GM23248 (cell line): ENCODE measurements at regions of chr20 and their contacts with region 1.

Region 1: DNA sequence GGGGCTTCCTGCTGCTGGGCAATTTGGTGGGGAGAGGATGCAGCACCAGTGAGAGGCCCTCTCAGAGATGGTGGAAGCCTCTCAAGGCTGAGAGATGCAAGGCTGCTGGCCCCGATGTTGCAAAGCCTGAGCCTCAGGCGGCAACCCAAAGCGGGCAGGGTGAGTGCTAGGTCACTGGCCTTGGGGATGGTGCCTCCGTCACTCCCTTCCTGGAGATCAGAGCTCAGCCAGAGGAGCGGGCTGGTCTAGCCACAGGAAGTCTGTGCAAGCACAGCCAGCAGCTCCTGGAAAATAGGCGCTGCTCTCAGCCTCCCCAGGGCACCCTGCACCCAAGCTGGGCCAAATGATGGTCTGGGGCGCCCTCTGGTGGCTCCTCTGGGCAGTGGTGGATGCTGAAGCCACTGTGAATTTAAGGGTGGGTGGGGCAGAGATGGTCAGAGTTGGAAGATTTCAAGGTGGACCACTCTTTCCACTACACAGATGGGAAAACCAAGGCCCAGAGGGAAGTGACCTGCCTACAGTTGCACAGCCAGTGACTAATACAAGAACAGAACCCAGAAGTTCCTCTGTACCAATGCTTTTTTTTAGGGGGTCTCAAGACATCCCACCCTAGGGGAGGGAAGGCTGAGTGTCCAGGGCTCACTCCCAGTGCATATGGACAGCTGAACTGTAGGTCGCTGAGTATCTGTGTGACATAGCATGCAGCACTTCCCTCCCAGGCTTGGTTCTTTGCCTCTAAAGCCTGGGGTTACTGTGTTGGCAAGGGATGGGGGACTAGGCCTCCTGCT is 20.8 kb downstream of the C20orf203 start:
- DNase-seq: peak; percentile 84
- H3K4me3 ChIP-seq: no peak overlapping the region
- H3K27ac ChIP-seq: no peak overlapping the region
- H3K4me1 ChIP-seq: no peaks in the 10 kb centered on the region
- H3K27me3 ChIP-seq: no peaks in the 10 kb centered on the region

Region 2: DNA sequence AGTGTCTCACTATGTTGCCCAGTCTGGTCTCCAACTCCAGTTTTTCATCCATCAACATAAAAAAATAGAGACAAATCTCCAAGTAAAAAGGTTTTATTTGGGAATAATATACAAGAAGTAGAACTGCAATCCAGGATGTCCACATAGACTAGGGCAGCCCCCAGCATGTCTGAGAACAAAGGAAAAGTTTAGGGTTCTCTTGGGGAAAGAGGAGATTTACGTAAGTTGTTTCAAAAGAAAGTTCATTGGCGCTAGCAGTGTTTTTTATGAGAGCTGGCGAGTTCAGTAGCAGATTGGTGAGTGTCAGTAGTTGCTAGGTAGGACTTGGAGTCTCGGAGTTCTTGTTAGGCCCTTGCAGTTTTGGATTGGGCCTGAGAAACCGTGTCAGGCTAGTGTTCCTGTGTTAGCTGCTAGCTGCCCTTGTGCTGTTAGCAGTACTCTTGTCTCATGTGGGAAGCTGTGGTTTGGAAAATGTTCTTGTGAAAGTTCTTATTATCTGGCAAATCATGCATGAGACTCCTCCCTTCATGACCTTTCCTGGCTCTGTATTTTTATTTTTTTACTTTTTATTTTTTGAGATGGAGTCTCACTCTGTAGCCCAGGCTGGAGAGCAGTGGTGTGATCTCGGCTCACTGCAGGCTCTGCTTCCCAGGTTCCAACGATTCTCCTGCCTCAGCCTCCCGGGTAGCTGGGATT is 757.8 kb before region 1 on chr20:
- in situ Hi-C with region 1: no loop called
- DNase-seq: peak; percentile 66
- H3K4me3 ChIP-seq: no peak overlapping the region
- H3K27ac ChIP-seq: no peak overlapping the region
- H3K4me1 ChIP-seq: no peaks in the 10 kb centered on the region
- H3K27me3 ChIP-seq: peaks cover 13% of the 10 kb centered on the region

Region 3: DNA sequence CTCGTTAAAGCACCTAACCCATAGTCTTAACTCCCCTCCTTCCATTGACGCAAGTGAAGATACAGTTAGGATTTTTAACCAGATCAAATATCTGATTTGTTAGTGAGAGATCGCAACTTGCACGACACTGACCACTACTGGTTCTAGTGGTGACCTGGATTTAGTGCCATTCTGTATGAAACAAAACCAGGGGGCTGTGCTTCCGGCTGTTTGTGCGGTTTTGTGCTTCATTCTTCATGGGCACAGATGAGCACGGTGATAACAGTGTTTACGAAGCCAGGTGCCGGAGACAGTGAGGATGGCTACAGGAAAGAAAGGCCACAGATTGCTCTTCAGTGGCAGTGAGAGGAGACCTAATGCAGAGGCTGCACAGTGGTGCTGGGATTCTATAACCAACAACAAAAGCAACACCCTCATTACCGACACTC is 143.3 kb before region 1 on chr20:
- in situ Hi-C with region 1: loop called (anchors 10 kb)
- DNase-seq: no peak
- H3K4me3 ChIP-seq: no peak overlapping the region
- H3K27ac ChIP-seq: no peak overlapping the region
- H3K4me1 ChIP-seq: no peaks in the 10 kb centered on the region
- H3K27me3 ChIP-seq: no peaks in the 10 kb centered on the region